Tibial artery (tissue), 4 donors: ENCODE measurements at regions of chr21 and their contacts with region 1.

Region 1: GRCh38 chr21:46122237-46122671 is 24.3 kb downstream of the COL6A2 start:
- DNase-seq: peak; percentile 16 to 66
- H3K4me3 ChIP-seq: no peak overlapping the region
- H3K27ac ChIP-seq: no peak overlapping the region
- H3K4me1 ChIP-seq: no peaks in the 10 kb centered on the region
- H3K27me3 ChIP-seq: no peaks in the 10 kb centered on the region
- CTCF ChIP-seq: no peak

Region 2: DNA sequence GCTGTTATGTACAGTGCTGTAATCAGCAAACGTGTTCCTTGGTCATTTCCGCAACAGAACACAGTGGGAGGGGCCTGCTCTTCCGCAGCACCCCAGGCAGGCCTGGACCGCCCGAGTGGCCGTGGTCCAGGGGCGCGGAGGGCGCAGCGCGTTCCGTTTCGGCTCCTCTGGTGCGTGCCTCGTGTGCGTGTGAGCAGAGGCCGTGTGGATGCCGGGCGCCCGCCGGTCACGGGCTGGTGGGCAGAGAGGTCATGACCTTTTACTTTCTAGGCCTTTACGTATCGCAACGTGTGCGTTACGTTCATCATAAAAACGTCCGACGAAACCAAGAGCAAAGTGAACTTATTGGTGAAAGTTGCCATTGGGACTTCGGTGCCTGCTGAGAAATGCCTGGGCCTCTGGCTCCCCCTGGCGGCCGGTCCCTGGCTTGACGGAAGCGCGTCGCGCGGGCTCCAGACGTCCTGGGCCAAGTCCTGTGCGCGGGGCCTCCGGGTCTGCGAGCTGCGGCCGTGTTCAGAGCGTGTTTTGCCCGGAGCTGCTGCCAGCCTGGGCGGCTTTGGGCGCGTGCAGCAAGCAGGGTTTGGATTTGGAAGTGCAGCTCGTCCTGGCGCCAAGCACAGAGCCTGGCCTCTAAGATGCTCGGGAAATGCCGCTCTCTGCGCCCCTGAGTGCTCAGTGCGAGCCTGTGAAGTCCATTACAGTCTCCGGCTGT is 682.9 kb before region 1 on chr21:
- intact Hi-C with region 1: no loop called
- DNase-seq: peak; percentile 82 to 91
- H3K4me3 ChIP-seq: peak overlapping the region; percentile 24 to 49
- H3K27ac ChIP-seq: peak overlapping the region; percentile 65 to 75
- H3K4me1 ChIP-seq: peaks cover 4 to 60% (median 48%) of the 10 kb centered on the region in 4 donors
- H3K27me3 ChIP-seq: no peaks in the 10 kb centered on the region
- CTCF ChIP-seq: peak; percentile 95 to 99

Region 3: GRCh38 chr21:45995686-45996179 is 126.5 kb before region 1 on chr21:
- intact Hi-C with region 1: loop called (anchors 10 kb)
- DNase-seq: peak in 1 of 2 donors; percentile 65
- H3K4me3 ChIP-seq: no peak overlapping the region
- H3K27ac ChIP-seq: peak overlapping the region; percentile 73 to 82
- H3K4me1 ChIP-seq: peaks cover 0 to 28% (median 3%) of the 10 kb centered on the region in 4 donors
- H3K27me3 ChIP-seq: no peaks in the 10 kb centered on the region
- CTCF ChIP-seq: no peak

Region 4: GRCh38 chr21:46060596-46061061 is 61.6 kb before region 1 on chr21:
- intact Hi-C with region 1: no loop called
- DNase-seq: peak; percentile 92 to 97
- H3K4me3 ChIP-seq: no peak overlapping the region
- H3K27ac ChIP-seq: peak overlapping the region; percentile 90 to 97
- H3K4me1 ChIP-seq: peaks cover under 1 to 69% (median 43%) of the 10 kb centered on the region in 4 donors
- H3K27me3 ChIP-seq: no peaks in the 10 kb centered on the region
- CTCF ChIP-seq: peak in 1 of 2 experiments; percentile 12